ENCODE measurements at regions of chr19 and their contacts with region 1.

Region 1: GRCh38 chr19:17282488-17283255 is 971 bp downstream of the ANKLE1 start:
- DNase-seq: peak; percentile 94
- H3K4me3 Mint-ChIP-seq: peak overlapping the region; percentile 92
- H3K27ac Mint-ChIP-seq: peak overlapping the region; percentile 87
- H3K4me1 Mint-ChIP-seq: peaks cover 8% of the 10 kb centered on the region
- H3K27me3 Mint-ChIP-seq: peaks cover 2% of the 10 kb centered on the region

Region 2: DNA sequence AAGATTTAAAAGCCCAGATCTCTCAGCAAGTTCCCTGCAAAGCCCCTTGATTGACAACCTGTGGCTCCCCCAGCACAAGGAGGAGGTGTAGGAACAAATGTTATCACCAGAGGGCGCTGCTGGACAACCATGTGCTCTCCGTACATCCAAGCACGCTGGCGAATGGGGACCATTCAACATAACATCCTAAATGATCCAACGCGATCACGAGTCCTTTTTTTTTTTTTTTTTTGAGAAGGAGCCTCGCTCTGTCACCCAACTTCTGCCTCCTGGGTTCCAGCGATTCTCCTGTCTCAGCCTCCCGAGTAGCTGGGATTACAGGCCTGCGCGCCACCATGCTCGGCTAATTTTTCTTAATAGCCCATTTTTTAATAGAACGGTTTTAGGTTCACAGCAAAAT is 511.1 kb before region 1 on chr19:
- intact Hi-C with region 1: loop called (anchors 2 kb)
- DNase-seq: peak; percentile 92
- H3K4me3 Mint-ChIP-seq: no peak overlapping the region
- H3K27ac Mint-ChIP-seq: no peak overlapping the region
- H3K4me1 Mint-ChIP-seq: no peaks in the 10 kb centered on the region
- H3K27me3 Mint-ChIP-seq: peaks cover 2% of the 10 kb centered on the region

Region 3: DNA sequence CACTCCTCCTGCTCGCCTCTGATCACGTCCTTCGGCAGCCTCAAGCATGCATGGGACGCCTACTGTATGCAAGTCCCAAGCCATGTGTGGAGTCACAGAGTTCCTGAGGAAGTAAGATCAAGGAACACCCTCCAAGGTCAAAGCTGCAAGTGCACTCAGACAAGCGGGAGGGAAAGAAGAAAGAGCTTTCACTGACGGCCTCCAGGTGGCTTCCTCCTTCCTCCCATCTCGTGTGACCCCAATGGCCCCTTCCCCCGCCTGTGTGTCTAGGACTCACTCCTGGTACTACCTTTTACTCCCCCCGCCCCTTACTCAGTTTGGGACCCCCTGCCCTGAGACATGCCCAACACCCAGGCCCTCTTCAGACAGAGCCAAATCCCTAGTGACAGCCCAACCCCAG is 213.5 kb before region 1 on chr19:
- intact Hi-C with region 1: loop called (anchors 1 kb)
- DNase-seq: no peak
- H3K4me3 Mint-ChIP-seq: no peak overlapping the region
- H3K27ac Mint-ChIP-seq: no peak overlapping the region
- H3K4me1 Mint-ChIP-seq: peaks cover 44% of the 10 kb centered on the region
- H3K27me3 Mint-ChIP-seq: no peaks in the 10 kb centered on the region

Region 4: GRCh38 chr19:17205237-17206140 is 77.2 kb before region 1 on chr19:
- intact Hi-C with region 1: loop called (anchors 5 kb)
- DNase-seq: peak; percentile 88
- H3K4me3 Mint-ChIP-seq: no peak overlapping the region
- H3K27ac Mint-ChIP-seq: no peak overlapping the region
- H3K4me1 Mint-ChIP-seq: peaks cover 11% of the 10 kb centered on the region
- H3K27me3 Mint-ChIP-seq: no peaks in the 10 kb centered on the region

Region 5: GRCh38 chr19:17235618-17236377 is 46.9 kb before region 1 on chr19:
- intact Hi-C with region 1: loop called (anchors 10 kb)
- DNase-seq: peak; percentile 93
- H3K4me3 Mint-ChIP-seq: peak overlapping the region; percentile 84
- H3K27ac Mint-ChIP-seq: peak overlapping the region; percentile 86
- H3K4me1 Mint-ChIP-seq: peaks cover 5% of the 10 kb centered on the region
- H3K27me3 Mint-ChIP-seq: no peaks in the 10 kb centered on the region

Region 6: DNA sequence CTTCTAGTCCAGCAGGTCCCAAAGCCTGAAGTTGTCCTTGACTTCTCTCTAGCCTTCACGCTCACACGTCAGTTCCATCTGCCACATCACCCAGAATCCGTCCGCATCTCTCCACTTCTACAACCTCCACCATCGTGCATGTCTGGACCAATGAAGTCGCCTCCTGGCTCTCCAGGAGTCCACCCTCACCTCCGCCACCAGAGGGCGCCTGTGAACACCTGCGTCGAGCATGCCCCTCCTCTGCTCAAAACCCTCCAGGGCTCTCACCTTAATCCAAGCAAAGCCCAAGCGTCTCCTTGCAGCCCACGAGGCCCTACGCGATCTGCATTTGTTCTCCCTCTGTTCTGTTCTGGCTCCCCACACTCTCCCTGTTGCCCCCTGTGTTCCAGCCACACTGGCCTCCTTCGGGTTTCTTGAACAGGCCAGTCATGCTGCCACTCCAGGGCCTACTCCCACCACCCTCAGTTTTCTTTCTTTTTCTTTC is 21.8 kb before region 1 on chr19:
- intact Hi-C with region 1: loop called (anchors 1 kb)
- DNase-seq: peak; percentile 96
- H3K4me3 Mint-ChIP-seq: no peak overlapping the region
- H3K27ac Mint-ChIP-seq: no peak overlapping the region
- H3K4me1 Mint-ChIP-seq: peaks cover 8% of the 10 kb centered on the region
- H3K27me3 Mint-ChIP-seq: peaks cover 2% of the 10 kb centered on the region

Region 7: DNA sequence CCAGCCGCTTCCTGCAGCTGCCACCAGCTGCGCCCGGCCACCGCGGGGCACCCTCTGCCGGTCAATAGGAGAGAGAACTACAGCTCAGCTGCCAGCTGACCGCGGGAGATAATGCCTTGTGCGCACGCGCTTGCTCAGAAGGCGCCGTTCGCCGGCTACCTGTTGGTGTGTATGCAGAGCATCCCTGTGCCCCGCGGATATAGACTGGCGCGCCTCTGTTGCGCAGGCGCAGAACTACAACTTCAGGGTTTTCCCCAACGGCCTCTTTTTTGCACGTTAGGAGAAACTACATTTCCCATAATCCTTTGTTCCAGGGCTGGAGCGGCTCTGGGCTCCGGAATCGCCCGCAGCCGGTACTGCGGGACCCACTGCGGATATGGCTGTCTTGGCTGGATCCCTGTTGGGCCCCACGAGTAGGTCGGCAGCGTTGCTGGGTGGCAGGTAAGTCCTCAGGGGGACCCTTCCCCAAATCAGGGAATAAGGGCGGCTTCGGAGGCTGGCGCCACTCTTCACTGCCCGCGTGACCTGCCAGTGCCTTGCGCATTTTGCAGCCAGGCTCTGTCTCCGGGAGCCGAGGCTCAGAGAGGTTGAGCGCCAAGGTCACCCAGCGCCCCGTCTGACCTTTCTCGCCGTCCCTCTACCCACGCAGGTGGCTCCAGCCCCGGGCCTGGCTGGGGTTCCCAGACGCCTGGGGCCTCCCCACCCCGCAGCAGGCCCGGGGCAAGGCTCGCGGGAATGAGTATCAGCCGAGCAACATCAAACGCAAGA is 23.0 kb after region 1 on chr19 and contains the start of gene MRPL34:
- intact Hi-C with region 1: no loop called
- DNase-seq: peak; percentile 98
- H3K4me3 Mint-ChIP-seq: peak within 1 kb of the TSS; percentile 91
- H3K27ac Mint-ChIP-seq: peak within 1 kb of the TSS; percentile 93
- H3K4me1 Mint-ChIP-seq: peaks cover 42% of the 10 kb centered on the region
- H3K27me3 Mint-ChIP-seq: no peaks in the 10 kb centered on the region
- total RNA-seq, gene MRPL34: 101 and 103 TPM in 2 replicates